Upper lobe of right lung (tissue), 1 donor: ENCODE measurements at regions of chr6 and their contacts with region 1.

Region 1: GRCh38 chr6:71383901-71384489 is 95.4 kb downstream of the OGFRL1 start:
- DNase-seq: no peak
- ATAC-seq: peak; percentile 50
- H3K4me3 ChIP-seq: no peak overlapping the region
- H3K27ac ChIP-seq: no peak overlapping the region
- H3K4me1 ChIP-seq: peaks cover 51% of the 10 kb centered on the region
- H3K27me3 ChIP-seq: no peaks in the 10 kb centered on the region
- CTCF ChIP-seq: peak; percentile 65

Region 2: DNA sequence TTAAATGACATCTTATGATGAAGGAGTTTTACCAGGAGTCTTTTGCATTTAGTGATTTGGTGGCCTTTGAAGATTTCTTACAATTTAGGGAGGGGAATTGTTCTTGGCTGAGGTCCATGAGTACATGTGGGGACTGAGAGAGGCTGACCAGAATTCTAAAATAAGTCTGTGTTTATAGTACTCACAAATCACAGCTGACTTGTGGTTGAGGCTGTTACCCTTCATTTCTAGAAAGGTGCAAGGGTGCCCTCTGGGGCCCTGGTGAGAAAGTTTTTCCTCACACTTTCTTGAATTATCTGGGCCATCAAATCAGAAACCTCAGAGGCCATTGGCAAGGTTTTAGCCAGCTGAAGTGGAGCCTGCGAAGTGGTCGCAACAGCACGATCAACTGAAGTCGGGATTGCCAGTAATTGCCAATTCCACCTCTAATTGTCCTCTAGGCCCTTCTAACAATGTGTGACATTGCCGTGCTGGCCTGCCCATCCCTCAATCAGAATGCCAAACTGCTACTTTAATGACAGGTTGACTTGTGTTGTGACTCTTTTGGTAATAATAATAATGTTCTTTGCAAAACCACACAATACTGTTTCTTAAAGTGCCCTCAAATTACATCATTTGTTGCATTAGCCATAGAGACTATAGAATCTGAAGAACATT is 126.2 kb after region 1 on chr6:
- intact Hi-C with region 1: loop called (anchors 10 kb)
- DNase-seq: peak; percentile 60
- ATAC-seq: peak; percentile 94
- H3K4me3 ChIP-seq: no peak overlapping the region
- H3K27ac ChIP-seq: no peak overlapping the region
- H3K4me1 ChIP-seq: peaks cover 11% of the 10 kb centered on the region
- H3K27me3 ChIP-seq: no peaks in the 10 kb centered on the region
- CTCF ChIP-seq: peak; percentile 71